SK-N-SH (cell line): ENCODE measurements at regions of chr15 and their contacts with region 1.

Region 1: DNA sequence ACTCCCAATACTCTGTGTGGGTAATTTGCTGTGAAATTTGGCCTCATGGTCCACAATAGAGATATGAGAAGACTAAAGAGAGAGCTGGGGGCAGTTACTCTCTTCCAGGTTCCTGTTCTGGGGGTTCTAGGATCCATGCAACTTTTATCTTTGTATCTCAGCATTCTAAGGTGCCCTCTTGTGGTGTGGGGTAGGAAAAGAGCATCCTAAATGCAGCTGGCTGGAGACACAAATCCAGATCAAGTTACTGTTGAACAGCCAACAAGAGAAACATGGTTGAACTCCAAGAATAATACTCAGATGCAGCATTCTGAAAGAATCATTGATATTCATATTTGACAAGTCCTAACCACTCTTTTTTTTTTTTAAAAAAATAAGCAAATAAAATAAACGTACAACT is 238.2 kb downstream of the GREM1 start:
- DNase-seq: peak; percentile 40
- H3K4me3 ChIP-seq: no peak overlapping the region
- H3K27ac ChIP-seq: peak overlapping the region; percentile 35 to 55; a peak in 3 of 4 replicates
- H3K4me1 ChIP-seq: peaks cover 0 to 15% of the 10 kb centered on the region in 2 experiments; a peak in 3 of 4 replicates
- H3K27me3 ChIP-seq: no peaks in the 10 kb centered on the region
- CTCF ChIP-seq: peak; percentile 76
- EP300 ChIP-seq: no peak
- RAD21 ChIP-seq: peak; percentile 70

Region 2: GRCh38 chr15:32664796-32665195 is 291.2 kb before region 1 on chr15:
- CTCF ChIA-PET with region 1: interaction called, 86 read pairs
- POLR2A ChIA-PET with region 1: no interaction called
- DNase-seq: no peak
- H3K4me3 ChIP-seq: no peak overlapping the region
- H3K27ac ChIP-seq: no peak overlapping the region
- H3K4me1 ChIP-seq: peaks cover 4 to 14% of the 10 kb centered on the region in 2 experiments; a peak in 3 of 4 replicates
- H3K27me3 ChIP-seq: no peaks in the 10 kb centered on the region
- CTCF ChIP-seq: no peak
- EP300 ChIP-seq: no peak
- RAD21 ChIP-seq: no peak

Region 3: GRCh38 chr15:32942401-32942841 is 13.6 kb before region 1 on chr15:
- CTCF ChIA-PET with region 1: interaction called, 10 read pairs
- POLR2A ChIA-PET with region 1: no interaction called
- DNase-seq: no peak
- H3K4me3 ChIP-seq: no peak overlapping the region
- H3K27ac ChIP-seq: no peak overlapping the region
- H3K4me1 ChIP-seq: peaks cover 0 to 4% of the 10 kb centered on the region in 2 experiments; a peak in 2 of 4 replicates
- H3K27me3 ChIP-seq: no peaks in the 10 kb centered on the region
- CTCF ChIP-seq: no peak
- EP300 ChIP-seq: no peak
- RAD21 ChIP-seq: no peak